Activated B cell treated with CpG ODN at 0.5 μM for 24 hours (primary cell): ENCODE measurements at regions of chr20 and their contacts with region 1.

Region 1: GRCh38 chr20:10553326-10553984 is 118.3 kb downstream of the SLX4IP start:
- DNase-seq: no peak
- ATAC-seq: no peak
- H3K4me3 Mint-ChIP-seq: no peak overlapping the region
- H3K27ac Mint-ChIP-seq: no peak overlapping the region
- H3K4me1 Mint-ChIP-seq: peaks cover 31% of the 10 kb centered on the region
- H3K27me3 Mint-ChIP-seq: no peaks in the 10 kb centered on the region
- CTCF ChIP-seq: no peak

Region 2: DNA sequence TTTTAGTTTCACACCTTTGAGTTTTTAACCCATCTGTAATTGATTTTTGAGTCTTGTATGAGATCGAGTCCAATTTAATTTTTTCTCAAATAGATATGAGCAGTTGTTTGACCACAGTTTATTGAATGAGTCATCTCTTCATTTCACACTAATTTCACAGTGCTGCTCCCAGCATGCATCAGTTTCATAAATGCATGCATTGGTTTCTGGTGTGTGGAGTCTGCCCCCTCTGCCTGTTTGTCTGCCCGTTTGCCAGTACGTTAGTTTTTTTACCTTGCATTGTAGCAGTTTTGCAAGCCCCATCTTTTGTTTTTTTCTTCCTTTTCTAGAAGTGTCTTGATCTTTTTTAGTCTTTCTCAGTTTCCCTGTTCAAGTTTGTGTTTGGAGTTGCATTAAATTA is 106.4 kb before region 1 on chr20:
- CTCF ChIA-PET with region 1: no interaction called
- POLR2A ChIA-PET with region 1: no interaction called
- intact Hi-C with region 1: no loop called
- DNase-seq: no peak
- ATAC-seq: peak; percentile 99
- H3K4me3 Mint-ChIP-seq: peak overlapping the region; percentile 72
- H3K27ac Mint-ChIP-seq: peak overlapping the region; percentile 38
- H3K4me1 Mint-ChIP-seq: peaks cover 19% of the 10 kb centered on the region
- H3K27me3 Mint-ChIP-seq: no peaks in the 10 kb centered on the region
- CTCF ChIP-seq: no peak

Region 3: DNA sequence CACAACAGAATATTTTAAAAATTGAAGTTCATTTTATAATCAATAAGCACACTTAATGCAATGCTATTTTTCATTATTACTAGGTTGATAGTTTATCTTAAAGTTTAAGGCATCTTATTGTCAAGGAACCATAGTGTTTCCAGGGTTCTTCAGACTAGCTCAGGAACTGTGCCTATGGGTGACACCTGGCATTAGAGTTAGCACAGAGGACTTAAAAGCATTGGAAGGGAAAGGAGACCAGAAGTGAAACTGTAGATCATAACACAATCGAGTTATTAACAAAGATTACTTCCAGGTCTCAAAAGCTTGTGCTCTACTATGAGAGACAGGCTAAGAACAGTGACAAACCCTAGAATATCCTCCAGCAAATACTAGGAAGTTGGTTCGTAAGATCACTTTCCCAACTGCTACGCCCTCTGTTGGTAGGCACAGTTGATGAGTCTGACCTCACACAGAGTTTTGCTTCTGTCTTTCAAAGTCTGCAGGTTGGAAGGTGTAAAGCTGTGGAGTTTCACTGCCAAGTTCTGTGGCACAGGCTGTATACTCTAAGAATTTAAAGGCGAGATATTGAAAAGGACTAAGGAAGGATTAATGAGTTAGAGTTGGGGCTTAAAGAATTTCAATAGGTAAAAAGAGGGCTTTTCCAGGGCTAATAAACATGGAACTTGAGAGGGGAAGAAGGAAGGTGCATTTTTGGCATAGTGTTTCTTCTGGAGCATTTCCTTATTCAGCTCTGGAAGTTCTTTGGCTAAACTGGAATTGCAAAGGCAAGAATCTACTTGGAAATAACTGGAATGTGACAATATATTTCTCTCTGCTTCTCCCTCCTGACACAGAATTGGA is 651.7 kb after region 1 on chr20:
- CTCF ChIA-PET with region 1: no interaction called
- POLR2A ChIA-PET with region 1: no interaction called
- intact Hi-C with region 1: loop called (anchors 2 kb)
- DNase-seq: no peak
- ATAC-seq: no peak
- H3K4me3 Mint-ChIP-seq: no peak overlapping the region
- H3K27ac Mint-ChIP-seq: no peak overlapping the region
- H3K4me1 Mint-ChIP-seq: no peaks in the 10 kb centered on the region
- H3K27me3 Mint-ChIP-seq: no peaks in the 10 kb centered on the region
- CTCF ChIP-seq: no peak

Region 4: DNA sequence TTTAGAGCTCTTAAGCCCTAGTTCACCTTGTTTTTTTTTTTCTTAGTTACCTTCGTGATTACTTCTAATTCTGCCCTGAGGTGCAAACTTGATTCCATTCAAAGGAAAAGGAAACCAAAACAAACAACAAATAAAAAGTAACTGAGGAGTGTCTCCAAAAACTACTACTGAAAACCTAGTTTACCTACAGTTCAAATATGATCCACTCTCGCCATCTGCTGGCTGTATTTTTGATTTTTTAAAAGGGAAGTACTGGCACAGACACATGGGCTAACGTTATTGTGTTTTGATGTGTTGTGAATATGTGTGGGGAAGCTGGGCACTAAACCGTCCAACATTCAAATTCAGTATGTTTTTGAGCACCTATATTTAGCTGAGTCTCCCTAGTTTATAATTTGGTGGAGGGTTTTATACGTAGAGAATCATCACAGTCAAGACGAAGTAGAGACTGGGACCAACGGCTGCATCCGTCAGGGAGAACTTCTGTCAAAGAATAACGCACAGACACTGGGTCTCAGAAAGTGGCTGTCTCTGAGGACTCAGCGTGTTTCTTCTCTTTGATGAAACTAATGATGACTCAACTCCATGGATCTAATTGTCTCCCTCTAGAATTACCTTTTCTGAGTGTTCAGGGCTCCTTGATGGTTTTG is 990.7 kb after region 1 on chr20:
- CTCF ChIA-PET with region 1: no interaction called
- POLR2A ChIA-PET with region 1: no interaction called
- intact Hi-C with region 1: loop called (anchors 5 kb)
- DNase-seq: no peak
- ATAC-seq: no peak
- H3K4me3 Mint-ChIP-seq: no peak overlapping the region
- H3K27ac Mint-ChIP-seq: no peak overlapping the region
- H3K4me1 Mint-ChIP-seq: no peaks in the 10 kb centered on the region
- H3K27me3 Mint-ChIP-seq: no peaks in the 10 kb centered on the region
- CTCF ChIP-seq: no peak